Sciatic nerve (tissue), 2 donors: ENCODE measurements at regions of chr19 and their contacts with region 1.

Region 1: GRCh38 chr19:57914531-57914930 is 1.9 kb downstream of the ZNF417 start:
- DNase-seq: no peak
- ATAC-seq: no peak

Region 2: DNA sequence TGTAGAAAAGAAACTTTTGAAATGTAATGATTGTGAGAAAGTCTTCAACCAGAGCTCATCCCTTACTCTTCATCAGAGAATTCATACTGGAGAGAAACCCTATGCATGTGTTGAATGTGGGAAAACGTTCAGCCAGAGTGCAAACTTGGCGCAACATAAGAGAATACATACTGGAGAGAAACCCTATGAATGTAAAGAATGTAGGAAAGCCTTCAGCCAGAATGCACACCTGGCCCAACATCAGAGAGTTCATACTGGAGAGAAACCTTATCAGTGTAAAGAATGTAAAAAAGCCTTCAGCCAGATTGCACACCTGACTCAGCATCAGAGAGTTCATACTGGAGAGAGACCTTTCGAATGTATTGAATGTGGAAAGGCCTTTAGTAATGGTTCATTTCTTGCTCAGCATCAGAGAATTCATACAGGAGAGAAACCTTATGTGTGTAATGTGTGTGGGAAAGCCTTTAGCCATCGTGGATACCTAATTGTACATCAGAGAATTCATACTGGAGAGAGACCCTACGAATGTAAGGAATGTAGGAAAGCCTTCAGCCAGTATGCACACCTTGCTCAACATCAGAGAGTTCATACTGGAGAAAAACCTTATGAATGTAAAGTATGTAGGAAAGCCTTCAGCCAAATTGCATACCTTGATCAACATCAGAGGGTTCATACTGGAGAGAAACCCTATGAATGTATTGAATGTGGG is 1491.1 kb before region 1 on chr19:
- intact Hi-C with region 1: loop called (anchors 5 kb)
- DNase-seq: no peak
- ATAC-seq: no peak